K562 (cell line): ENCODE measurements at regions of chr1 and their contacts with region 1.

Region 1: DNA sequence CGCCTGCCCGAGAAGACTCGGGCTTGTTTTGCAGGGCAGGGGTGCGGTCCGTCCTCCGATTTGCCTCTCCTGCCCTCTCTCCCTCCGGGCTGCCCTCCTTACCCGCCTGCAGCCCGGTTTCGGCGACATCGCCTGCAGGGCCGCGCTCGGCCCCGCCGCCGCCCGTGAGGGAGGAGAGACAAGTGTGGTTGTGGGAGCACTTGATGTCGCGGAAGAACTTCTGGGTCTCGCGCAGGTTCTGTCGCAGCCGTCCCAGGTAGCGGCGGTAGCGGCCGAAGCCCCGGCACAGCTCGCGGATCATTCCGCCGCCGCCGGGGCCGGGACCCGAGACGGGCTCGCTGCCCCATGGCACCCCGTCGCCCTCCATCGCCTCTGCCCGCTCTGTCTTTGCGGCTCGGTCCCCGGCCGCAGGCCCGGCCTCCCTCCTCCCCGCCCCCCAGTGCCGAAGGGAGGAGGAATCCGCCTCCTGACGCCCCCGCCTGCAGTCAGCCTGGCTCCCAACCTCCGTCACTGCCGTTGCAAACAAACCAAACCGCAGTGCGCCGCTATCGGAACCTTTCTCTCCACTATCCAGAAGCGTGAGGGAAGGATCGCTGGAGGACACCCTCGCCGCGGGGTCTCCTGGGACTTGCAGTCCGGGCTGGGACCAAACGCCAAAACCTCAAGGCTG is at the start of gene DSTYK:
- DNase-seq: peak; percentile 95 to 99 (median 96)
- ATAC-seq: peak; percentile 95
- H3K4me3 ChIP-seq: peak within 1 kb of the TSS; percentile 85
- H3K27ac ChIP-seq: peak within 1 kb of the TSS; percentile 66
- H3K4me1 ChIP-seq: peaks cover 16 to 44% of the 10 kb centered on the region in 2 experiments
- H3K27me3 ChIP-seq: no peaks in the 10 kb centered on the region
- CTCF ChIP-seq: no peak
- EP300 ChIP-seq: peak; percentile 84
- POLR2A ChIP-seq: peak; percentile 90
- RAD21 ChIP-seq: no peak; a peak in 1 of 4 replicates
- polyA plus RNA-seq, gene DSTYK: 4.6 to 5.0 TPM

Region 2: GRCh38 chr1:204640578-204640977 is 570.7 kb before region 1 on chr1:
- CTCF ChIA-PET with region 1: no interaction called
- POLR2A ChIA-PET with region 1: no interaction called
- in situ Hi-C with region 1: no loop called
- intact Hi-C with region 1: no loop called
- DNase-seq: peak in 3 of 4 experiments; percentile 23 to 36 (median 29)
- ATAC-seq: peak; percentile 68
- H3K4me3 ChIP-seq: no peak overlapping the region
- H3K27ac ChIP-seq: no peak overlapping the region
- H3K4me1 ChIP-seq: peaks cover 0 to 3% of the 10 kb centered on the region in 2 experiments; a peak in 1 of 5 replicates
- H3K27me3 ChIP-seq: peaks cover 31 to 56% of the 10 kb centered on the region in 2 experiments
- CTCF ChIP-seq: 0 out of 6 replicates have a peak, but pooled peaks of 1 of the 3 experiments have one; percentile 22
- EP300 ChIP-seq: no peak
- POLR2A ChIP-seq: no peak
- RAD21 ChIP-seq: no peak

Region 3: GRCh38 chr1:205172729-205173366 is 38.5 kb before region 1 on chr1:
- CTCF ChIA-PET with region 1: no interaction called
- POLR2A ChIA-PET with region 1: interaction called, 3 read pairs
- in situ Hi-C with region 1: no loop called
- intact Hi-C with region 1: loop called (anchors 5 kb)
- DNase-seq: peak; percentile 42 to 70 (median 56)
- ATAC-seq: peak; percentile 65
- H3K4me3 ChIP-seq: no peak overlapping the region
- H3K27ac ChIP-seq: peak overlapping the region; percentile 67
- H3K4me1 ChIP-seq: peaks cover 23 to 53% of the 10 kb centered on the region in 2 experiments
- H3K27me3 ChIP-seq: no peaks in the 10 kb centered on the region
- CTCF ChIP-seq: no peak
- EP300 ChIP-seq: peak; percentile 61; the same call in 1 of the 2 replicates
- POLR2A ChIP-seq: no peak
- RAD21 ChIP-seq: no peak

Region 4: DNA sequence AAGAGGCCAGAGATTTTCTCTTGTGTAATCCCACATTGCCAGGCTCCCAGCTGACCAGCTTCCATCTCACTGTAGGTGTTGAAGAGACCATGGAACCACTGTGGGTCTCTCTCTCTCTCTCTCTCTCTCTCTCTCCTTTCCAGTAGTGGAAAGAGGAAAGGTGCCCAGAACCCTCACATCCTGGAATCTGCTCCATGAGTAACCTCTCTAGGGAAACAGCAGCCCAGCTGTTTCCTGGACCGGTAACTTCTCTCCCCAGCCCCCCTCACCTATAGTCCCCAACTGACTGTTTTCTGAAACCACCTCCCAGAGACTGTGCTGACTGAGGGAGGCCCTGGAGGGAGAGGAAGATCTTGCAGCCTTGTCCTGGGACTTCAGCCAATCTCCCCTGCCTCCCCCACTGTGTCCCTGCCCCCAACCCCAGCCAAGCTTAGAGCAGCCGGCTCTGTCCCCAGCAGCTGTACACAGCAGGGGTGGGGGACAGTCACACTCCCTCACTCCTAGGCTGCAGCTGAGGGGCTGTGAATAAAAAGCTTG is 489.6 kb after region 1 on chr1:
- CTCF ChIA-PET with region 1: no interaction called
- POLR2A ChIA-PET with region 1: no interaction called
- in situ Hi-C with region 1: no loop called
- intact Hi-C with region 1: no loop called
- DNase-seq: peak in 2 of 4 experiments; percentile 38 to 48
- ATAC-seq: peak; percentile 73
- H3K4me3 ChIP-seq: no peak overlapping the region
- H3K27ac ChIP-seq: no peak overlapping the region
- H3K4me1 ChIP-seq: peaks cover 0 to 4% of the 10 kb centered on the region in 2 experiments; a peak in 3 of 5 replicates
- H3K27me3 ChIP-seq: no peaks in the 10 kb centered on the region
- CTCF ChIP-seq: no peak
- EP300 ChIP-seq: no peak
- POLR2A ChIP-seq: no peak
- RAD21 ChIP-seq: no peak